Activated CD4-positive, alpha-beta T cell treated with anti-CD3 and anti-CD28 coated beads for 36 hours (primary cell): ENCODE measurements at regions of chr5 and their contacts with region 1.

Region 1: DNA sequence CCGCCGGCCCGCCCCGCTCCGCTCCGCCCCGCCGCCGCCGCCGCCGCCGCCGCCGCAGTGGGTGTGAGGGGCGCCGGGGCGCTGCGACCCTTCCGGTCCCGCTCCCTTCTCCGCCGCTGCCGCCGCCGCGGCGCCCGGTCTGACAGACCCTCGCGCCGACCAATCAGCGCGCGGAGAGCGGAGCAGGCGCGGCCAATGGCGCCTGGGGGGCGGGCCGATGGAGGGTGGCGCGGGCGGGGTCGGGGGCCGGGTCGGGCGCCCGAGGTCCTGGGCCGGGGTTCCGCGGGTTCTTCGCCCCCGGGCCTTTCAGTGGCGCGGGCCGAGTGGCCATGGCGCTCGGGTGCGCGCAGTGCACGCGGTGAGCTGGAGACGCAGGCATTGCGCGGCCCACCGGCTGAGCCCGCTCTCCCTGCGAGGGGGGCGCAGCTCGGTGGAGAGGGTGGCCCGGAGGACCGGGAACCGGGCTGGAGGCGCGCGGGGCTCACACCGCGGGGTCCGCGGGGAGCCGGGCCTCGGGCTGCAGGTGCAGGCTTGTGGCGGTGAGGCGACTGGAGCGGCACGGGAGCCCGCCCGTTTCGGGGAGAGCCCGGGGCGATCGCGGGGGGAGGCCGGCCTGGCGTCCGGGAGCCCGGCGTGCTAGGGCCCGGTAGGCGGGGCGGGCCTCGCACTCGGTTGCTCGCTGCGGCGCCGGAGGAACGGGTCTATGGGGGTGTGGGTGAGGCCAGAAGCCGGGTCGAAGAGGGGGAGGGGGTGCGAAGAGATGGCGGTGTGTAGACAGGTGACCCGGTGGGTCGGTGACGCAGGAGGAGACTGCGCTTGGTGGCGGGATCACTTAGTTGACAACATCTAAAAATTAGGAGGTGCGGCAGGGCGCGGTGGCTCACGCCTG is at the start of gene MAPK9:
- DNase-seq: peak; percentile 91
- ATAC-seq: peak; percentile 85
- H3K4me3 Mint-ChIP-seq: peak within 1 kb of the TSS; percentile 91
- H3K27ac Mint-ChIP-seq: peak within 1 kb of the TSS; percentile 93
- H3K4me1 Mint-ChIP-seq: peaks cover 37% of the 10 kb centered on the region
- H3K27me3 Mint-ChIP-seq: no peaks in the 10 kb centered on the region
- total RNA-seq, gene MAPK9: 37.0 to 38.1 TPM

Region 2: GRCh38 chr5:179732417-179732917 is 559.7 kb before region 1 on chr5 and contains the start of gene MAML1:
- CTCF ChIA-PET with region 1: no interaction called
- POLR2A ChIA-PET with region 1: no interaction called
- intact Hi-C with region 1: loop called in 1 of 2 experiments (anchors 1 kb)
- DNase-seq: peak; percentile 99
- ATAC-seq: peak; percentile 95
- H3K4me3 Mint-ChIP-seq: peak within 1 kb of the TSS; percentile 92
- H3K27ac Mint-ChIP-seq: peak within 1 kb of the TSS; percentile 94
- H3K4me1 Mint-ChIP-seq: peaks cover 43% of the 10 kb centered on the region
- H3K27me3 Mint-ChIP-seq: no peaks in the 10 kb centered on the region
- total RNA-seq, gene MAML1: 25.4 to 32.6 TPM

Region 3: DNA sequence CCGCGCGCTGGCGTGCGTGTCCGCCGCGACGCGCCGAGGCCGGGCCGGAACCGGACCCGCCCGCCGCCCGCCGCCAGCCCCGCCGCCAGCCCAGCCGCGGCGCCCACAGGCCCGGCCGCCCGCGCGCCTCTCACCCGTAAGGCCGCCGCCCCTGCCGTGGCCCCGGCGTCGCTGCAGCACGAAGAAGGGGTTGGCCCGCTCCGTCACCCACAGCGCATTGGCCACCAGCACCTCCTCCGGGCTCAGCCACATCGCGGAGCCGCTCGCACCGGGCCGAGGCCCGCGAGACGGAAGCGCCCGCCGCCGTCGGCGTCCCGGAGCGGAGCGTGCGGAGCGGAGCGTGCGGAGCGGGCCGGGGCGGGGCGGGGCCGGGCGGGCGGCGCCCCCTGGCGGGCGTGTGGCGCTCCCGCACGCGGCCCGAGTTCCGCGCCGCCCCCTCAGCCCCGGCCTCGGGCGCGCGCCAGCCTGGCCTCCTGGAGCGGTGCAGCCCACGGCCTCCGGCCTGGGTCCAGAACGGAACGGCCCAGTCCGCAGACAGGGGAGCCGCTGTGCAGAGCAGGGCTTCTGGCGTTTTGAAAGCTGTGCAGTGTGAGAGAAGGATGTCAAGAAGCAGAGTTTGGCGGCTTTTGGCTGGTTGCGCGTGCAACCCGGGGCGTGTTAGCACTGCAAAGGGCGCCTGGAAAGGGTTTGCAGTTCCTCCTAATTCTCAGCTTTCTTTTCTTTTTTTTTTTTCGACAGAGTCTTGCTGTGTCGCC is 384.4 kb before region 1 on chr5 and contains the start of gene TBC1D9B:
- CTCF ChIA-PET with region 1: interaction called, 6 read pairs
- POLR2A ChIA-PET with region 1: no interaction called
- intact Hi-C with region 1: loop called in 1 of 2 experiments (anchors 5 kb)
- DNase-seq: peak; percentile 82
- ATAC-seq: peak; percentile 90
- H3K4me3 Mint-ChIP-seq: peak within 1 kb of the TSS; percentile 92
- H3K27ac Mint-ChIP-seq: peak within 1 kb of the TSS; percentile 83
- H3K4me1 Mint-ChIP-seq: peaks cover 13% of the 10 kb centered on the region
- H3K27me3 Mint-ChIP-seq: no peaks in the 10 kb centered on the region
- total RNA-seq, gene TBC1D9B: 103 to 121 TPM

Region 4: GRCh38 chr5:180353048-180353979 is 61.1 kb after region 1 on chr5 and contains the start of gene GFPT2:
- CTCF ChIA-PET with region 1: interaction called, 6 read pairs
- POLR2A ChIA-PET with region 1: no interaction called
- intact Hi-C with region 1: loop called in 1 of 2 experiments (anchors 1 kb)
- DNase-seq: peak; percentile 84
- ATAC-seq: peak; percentile 92
- H3K4me3 Mint-ChIP-seq: peak within 1 kb of the TSS; percentile 55
- H3K27ac Mint-ChIP-seq: no peak within 1 kb of the TSS
- H3K4me1 Mint-ChIP-seq: peaks cover 5% of the 10 kb centered on the region
- H3K27me3 Mint-ChIP-seq: peaks cover 35% of the 10 kb centered on the region
- total RNA-seq, gene GFPT2: 0.16 TPM

Region 5: GRCh38 chr5:180605554-180606214 is 313.5 kb after region 1 on chr5:
- CTCF ChIA-PET with region 1: interaction called, 4 read pairs
- POLR2A ChIA-PET with region 1: no interaction called
- intact Hi-C with region 1: loop called in 1 of 2 experiments (anchors 1 kb)
- DNase-seq: peak; percentile 85
- ATAC-seq: peak; percentile 74
- H3K4me3 Mint-ChIP-seq: no peak overlapping the region
- H3K27ac Mint-ChIP-seq: no peak overlapping the region
- H3K4me1 Mint-ChIP-seq: no peaks in the 10 kb centered on the region
- H3K27me3 Mint-ChIP-seq: no peaks in the 10 kb centered on the region

Region 6: DNA sequence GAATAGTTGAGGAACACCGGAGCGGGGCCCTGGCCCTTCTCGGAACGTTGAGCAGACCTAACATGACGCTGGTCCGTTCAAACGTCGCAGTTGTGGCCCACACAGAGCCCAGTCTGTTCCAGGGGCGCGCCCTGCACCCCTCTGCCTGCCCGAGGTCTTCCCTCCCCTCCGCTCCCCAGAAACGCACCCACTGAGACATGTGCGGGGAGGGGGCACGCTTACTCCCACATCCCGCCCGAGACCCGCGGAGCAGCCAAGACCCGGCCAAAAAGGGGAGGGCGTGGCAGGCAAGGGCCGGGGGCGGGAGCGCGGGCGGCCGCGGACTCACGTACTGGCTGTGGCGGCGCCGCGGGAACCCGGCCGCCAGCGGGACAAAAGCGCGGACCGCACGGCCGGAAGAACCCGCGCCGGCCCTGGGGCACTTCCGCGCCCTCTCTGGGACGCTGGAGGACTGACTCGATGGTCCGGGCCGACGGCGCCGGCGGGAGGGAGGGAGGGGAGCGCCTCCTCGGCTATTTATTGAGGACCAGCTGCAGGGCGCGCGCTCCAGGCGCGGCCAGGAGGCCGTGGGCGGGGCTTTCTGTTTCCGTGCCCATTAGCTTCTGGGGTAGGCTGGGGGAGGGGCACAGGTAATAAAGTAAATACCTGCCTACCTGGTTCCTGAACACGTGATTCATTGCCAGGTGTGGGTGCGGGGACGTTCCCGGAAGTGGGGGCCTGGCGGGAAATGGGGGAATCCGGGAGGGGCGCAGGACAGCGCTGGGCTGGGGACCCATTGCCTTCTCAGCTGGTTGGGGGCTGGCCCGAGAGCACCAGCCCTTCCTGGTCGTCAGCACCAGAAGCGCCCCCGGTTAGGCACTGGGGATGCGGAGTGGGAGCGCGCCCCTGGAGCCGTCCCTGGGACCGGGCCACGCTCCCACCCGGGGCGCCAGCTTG is 569.0 kb after region 1 on chr5 and contains the start of gene ZFP62:
- CTCF ChIA-PET with region 1: no interaction called
- POLR2A ChIA-PET with region 1: no interaction called
- intact Hi-C with region 1: loop called in 1 of 2 experiments (anchors 5 kb)
- DNase-seq: peak; percentile 93
- ATAC-seq: peak; percentile 88
- H3K4me3 Mint-ChIP-seq: peak within 1 kb of the TSS; percentile 93
- H3K27ac Mint-ChIP-seq: peak within 1 kb of the TSS; percentile 93
- H3K4me1 Mint-ChIP-seq: peaks cover 18% of the 10 kb centered on the region
- H3K27me3 Mint-ChIP-seq: peaks cover 1% of the 10 kb centered on the region
- total RNA-seq, gene ZFP62: 30.3 to 31.8 TPM